ENCODE measurements at regions of chr15 and their contacts with region 1.

Region 1: DNA sequence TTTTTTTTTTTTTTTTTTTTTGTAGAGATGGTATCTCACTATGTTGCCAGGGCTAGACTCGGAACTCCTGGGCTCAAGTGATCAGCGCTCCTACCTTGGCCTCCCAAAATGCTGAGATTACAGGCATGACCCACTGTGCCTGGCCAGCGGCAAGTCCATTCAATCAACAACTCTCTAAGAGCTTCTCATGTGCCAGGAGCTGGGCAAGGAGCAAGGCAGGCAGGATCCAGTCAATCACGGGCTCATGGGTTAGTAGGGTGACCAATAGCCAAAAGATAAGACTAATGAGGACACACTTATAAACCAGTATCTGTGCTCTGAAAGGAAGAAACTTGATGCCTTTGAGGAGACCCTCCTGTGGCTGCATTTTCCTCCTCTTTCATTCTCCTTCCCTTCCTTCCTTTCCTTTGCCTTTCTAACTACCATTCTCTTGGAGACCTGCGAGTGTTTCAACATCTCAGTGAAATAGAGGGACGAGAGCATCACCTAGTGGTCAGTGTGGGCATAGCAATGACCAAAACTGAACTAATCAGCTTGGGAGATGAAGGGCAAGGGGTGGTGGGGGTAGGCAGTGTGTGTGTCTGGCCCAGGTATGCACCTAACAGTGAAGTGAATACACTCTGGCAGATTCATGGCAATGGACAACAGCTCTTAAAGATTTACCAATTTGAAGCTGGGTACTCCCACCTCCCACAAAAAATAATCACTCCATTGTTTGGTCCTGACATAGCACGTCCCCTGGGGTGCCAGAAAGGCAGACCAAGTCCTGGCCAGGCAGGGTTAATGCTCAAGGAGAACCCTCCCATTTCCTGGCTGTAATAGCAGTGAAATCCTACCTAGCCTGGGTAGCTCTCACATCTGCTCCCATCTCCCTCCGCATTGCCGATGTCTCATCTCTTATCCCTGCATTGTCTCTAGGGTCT is 6.2 kb downstream of the RPP25 start:
- DNase-seq: peak; percentile 60 to 87 (median 74)
- H3K4me3 ChIP-seq: no peak overlapping the region
- H3K27ac ChIP-seq: no peak overlapping the region
- H3K4me1 ChIP-seq: peaks cover 2% of the 10 kb centered on the region
- H3K27me3 ChIP-seq: no peaks in the 10 kb centered on the region
- CTCF ChIP-seq: peak; percentile 93 to 98 (median 98)
- EP300 ChIP-seq: no peak
- POLR2A ChIP-seq: no peak

Region 2: DNA sequence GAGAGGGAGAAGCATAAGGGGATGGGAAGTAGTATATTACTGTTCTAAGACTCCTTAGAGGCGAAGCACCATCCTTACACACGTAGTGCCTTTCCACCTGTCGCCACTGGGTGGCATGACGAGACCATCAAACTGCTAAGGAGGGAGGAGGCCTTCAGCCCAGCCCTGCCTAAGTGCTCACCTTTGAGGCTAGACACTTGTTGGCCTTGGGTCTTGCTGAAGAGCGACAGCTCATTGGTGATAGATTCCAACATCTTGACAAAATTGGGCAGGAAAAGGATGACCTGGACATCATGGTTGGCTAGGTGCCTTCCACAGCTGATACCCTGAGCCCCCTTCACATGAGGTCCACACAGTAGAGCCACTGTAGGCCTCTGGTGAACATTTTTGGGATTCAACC is 315.1 kb before region 1 on chr15:
- intact Hi-C with region 1: loop called in 1 of 4 experiments (anchors 10 kb)
- DNase-seq: peak in 3 of 5 donors; percentile 59 to 71 (median 61)
- H3K4me3 ChIP-seq: no peak overlapping the region
- H3K27ac ChIP-seq: no peak overlapping the region
- H3K4me1 ChIP-seq: no peaks in the 10 kb centered on the region
- H3K27me3 ChIP-seq: no peaks in the 10 kb centered on the region
- CTCF ChIP-seq: peak; percentile 26 to 75 (median 72)
- EP300 ChIP-seq: no peak
- POLR2A ChIP-seq: no peak

Region 3: GRCh38 chr15:74768771-74769342 is 181.5 kb before region 1 on chr15:
- intact Hi-C with region 1: loop called in 3 of 4 experiments (anchors 5 kb)
- DNase-seq: peak; percentile 50 to 69 (median 67)
- H3K4me3 ChIP-seq: no peak overlapping the region
- H3K27ac ChIP-seq: no peak overlapping the region
- H3K4me1 ChIP-seq: no peaks in the 10 kb centered on the region
- H3K27me3 ChIP-seq: no peaks in the 10 kb centered on the region
- CTCF ChIP-seq: peak; percentile 65 to 79 (median 78)
- EP300 ChIP-seq: no peak
- POLR2A ChIP-seq: no peak

Region 4: GRCh38 chr15:74906446-74907162 is 43.7 kb before region 1 on chr15 and contains the start of gene FAM219B:
- intact Hi-C with region 1: loop called in 1 of 4 experiments (anchors 5 kb)
- DNase-seq: peak; percentile 90 to 94 (median 92)
- H3K4me3 ChIP-seq: peak within 1 kb of the TSS; percentile 76
- H3K27ac ChIP-seq: peak within 1 kb of the TSS; percentile 73 to 78
- H3K4me1 ChIP-seq: peaks cover 5% of the 10 kb centered on the region
- H3K27me3 ChIP-seq: no peaks in the 10 kb centered on the region
- CTCF ChIP-seq: no peak
- EP300 ChIP-seq: no peak
- POLR2A ChIP-seq: peak; percentile 93
- total RNA-seq, gene FAM219B: 31.0 to 125 (median 67.4) TPM

Measured in ovary (tissue), 10 donors.